Caco-2 (cell line): ENCODE measurements at regions of chr9 and their contacts with region 1.

Region 1: GRCh38 chr9:3920604-3921582 is 379.0 kb downstream of the GLIS3 start:
- DNase-seq: peak in 1 of 2 experiments; percentile 43
- H3K4me3 ChIP-seq: no peak overlapping the region
- H3K4me3 Mint-ChIP-seq: peak overlapping the region; percentile 65
- H3K27ac Mint-ChIP-seq: peak overlapping the region; percentile 14
- H3K4me1 ChIP-seq: peaks cover 17% of the 10 kb centered on the region
- H3K4me1 Mint-ChIP-seq: peaks cover 20% of the 10 kb centered on the region
- H3K27me3 ChIP-seq: no peaks in the 10 kb centered on the region
- H3K27me3 Mint-ChIP-seq: no peaks in the 10 kb centered on the region
- CTCF ChIP-seq: no peak

Region 2: DNA sequence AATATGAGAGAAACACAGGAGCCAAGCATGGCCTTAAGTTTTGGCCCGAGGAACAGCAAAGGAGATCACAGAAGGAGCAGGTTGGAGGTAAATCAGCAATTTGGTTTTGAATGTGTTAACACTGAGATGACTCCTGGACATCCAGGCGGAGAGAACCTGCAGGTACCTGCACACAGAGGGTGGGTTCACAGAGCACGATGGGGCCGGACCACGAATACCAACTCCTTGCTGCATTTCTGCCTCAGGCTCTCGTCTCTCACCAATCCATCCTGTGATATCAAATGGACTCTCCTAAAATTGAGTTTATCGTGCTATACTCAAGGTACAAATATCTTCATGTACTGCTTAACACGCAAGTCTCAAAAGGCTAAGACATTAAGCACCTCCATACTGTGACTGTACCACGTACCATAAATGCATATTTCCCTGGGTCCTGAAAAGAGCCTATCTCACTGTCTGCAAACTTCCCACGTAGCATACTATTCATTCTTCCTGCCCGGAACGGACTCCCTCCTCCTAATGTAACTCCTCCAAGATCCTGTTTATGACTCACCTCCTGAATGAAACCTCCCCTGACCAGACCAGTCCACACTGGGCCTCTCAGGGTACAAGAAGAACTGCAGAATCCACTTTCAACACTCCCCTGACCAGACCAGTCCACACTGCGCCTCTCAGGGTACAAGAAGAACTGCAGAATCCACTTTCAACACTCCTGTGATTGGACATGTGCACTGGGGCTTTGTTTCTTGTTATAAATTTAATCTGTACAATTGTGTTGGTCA is 14.3 kb before region 1 on chr9:
- CTCF ChIA-PET with region 1: no interaction called
- POLR2A ChIA-PET with region 1: no interaction called
- intact Hi-C with region 1: loop called (anchors 1 kb)
- DNase-seq: peak; percentile 24 to 62
- H3K4me3 ChIP-seq: no peak overlapping the region
- H3K4me3 Mint-ChIP-seq: no peak overlapping the region
- H3K27ac Mint-ChIP-seq: peak overlapping the region; percentile 14
- H3K4me1 ChIP-seq: peaks cover 32% of the 10 kb centered on the region
- H3K4me1 Mint-ChIP-seq: peaks cover 30% of the 10 kb centered on the region
- H3K27me3 ChIP-seq: no peaks in the 10 kb centered on the region
- H3K27me3 Mint-ChIP-seq: no peaks in the 10 kb centered on the region
- CTCF ChIP-seq: no peak

Region 3: GRCh38 chr9:3962971-3963642 is 42.2 kb after region 1 on chr9:
- CTCF ChIA-PET with region 1: no interaction called
- POLR2A ChIA-PET with region 1: no interaction called
- intact Hi-C with region 1: loop called (anchors 5 kb)
- DNase-seq: no peak
- H3K4me3 ChIP-seq: no peak overlapping the region
- H3K4me3 Mint-ChIP-seq: no peak overlapping the region
- H3K27ac Mint-ChIP-seq: peak overlapping the region; percentile 58
- H3K4me1 ChIP-seq: peaks cover 12% of the 10 kb centered on the region
- H3K4me1 Mint-ChIP-seq: peaks cover 8% of the 10 kb centered on the region
- H3K27me3 ChIP-seq: no peaks in the 10 kb centered on the region
- H3K27me3 Mint-ChIP-seq: no peaks in the 10 kb centered on the region
- CTCF ChIP-seq: no peak